ENCODE measurements at regions of chr12 and their contacts with region 1.

Region 1: GRCh38 chr12:132560614-132561426 is 49.6 kb downstream of the LRCOL1 start:
- DNase-seq: peak; percentile 67
- H3K4me3 Mint-ChIP-seq: peak overlapping the region; percentile 67
- H3K27ac Mint-ChIP-seq: no peak overlapping the region
- H3K4me1 Mint-ChIP-seq: peaks cover 5% of the 10 kb centered on the region
- H3K27me3 Mint-ChIP-seq: no peaks in the 10 kb centered on the region
- CTCF ChIP-seq: peak; percentile 85

Region 2: GRCh38 chr12:132153501-132154340 is 407.1 kb before region 1 on chr12:
- CTCF ChIA-PET with region 1: interaction called, 3 read pairs
- POLR2A ChIA-PET with region 1: no interaction called
- intact Hi-C with region 1: loop called (anchors 2 kb)
- DNase-seq: peak; percentile 71
- H3K4me3 Mint-ChIP-seq: no peak overlapping the region
- H3K27ac Mint-ChIP-seq: no peak overlapping the region
- H3K4me1 Mint-ChIP-seq: no peaks in the 10 kb centered on the region
- H3K27me3 Mint-ChIP-seq: no peaks in the 10 kb centered on the region
- CTCF ChIP-seq: peak; percentile 87

Region 3: GRCh38 chr12:132514216-132514820 is 46.5 kb before region 1 on chr12:
- CTCF ChIA-PET with region 1: interaction called, 10 read pairs
- POLR2A ChIA-PET with region 1: no interaction called
- intact Hi-C with region 1: no loop called
- DNase-seq: no peak
- H3K4me3 Mint-ChIP-seq: no peak overlapping the region
- H3K27ac Mint-ChIP-seq: no peak overlapping the region
- H3K4me1 Mint-ChIP-seq: peaks cover 17% of the 10 kb centered on the region
- H3K27me3 Mint-ChIP-seq: no peaks in the 10 kb centered on the region
- CTCF ChIP-seq: no peak

Region 4: DNA sequence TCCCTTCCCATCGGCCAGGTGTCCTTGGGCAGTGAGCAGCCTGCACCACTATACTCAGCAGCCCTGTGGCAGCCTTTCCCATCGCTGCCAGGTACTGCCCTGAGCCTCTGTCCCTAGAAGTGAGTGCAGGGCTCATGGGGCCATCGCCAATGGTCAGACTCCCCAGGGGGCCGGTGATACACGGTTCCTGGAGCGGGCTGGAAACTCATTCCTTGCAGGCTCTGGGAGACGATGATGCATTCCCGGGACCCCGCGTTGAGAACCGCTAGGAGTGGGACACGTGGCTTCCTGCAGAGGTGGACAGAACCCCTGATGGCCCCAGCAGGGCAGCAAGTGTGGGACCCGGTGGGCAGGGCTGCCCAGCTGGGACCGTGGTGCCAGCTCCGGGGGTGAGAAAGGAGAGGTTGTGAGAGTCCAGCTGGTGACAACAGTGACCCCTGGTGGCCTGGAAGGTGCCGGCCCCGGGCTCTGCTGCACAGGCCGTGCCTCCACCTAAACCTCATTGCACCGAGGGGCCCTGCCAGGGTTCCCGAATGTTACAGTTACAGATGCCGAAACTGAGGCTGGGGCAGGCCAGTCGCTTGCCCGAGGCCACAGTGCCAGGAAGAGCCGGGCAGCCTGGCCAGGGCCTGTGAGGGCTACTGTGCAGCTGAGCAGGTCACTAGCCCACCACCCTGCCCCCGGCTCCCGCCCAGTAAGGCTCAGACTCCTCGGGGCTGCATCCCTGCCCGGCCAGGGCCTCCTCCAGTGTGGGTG is 37.1 kb before region 1 on chr12:
- CTCF ChIA-PET with region 1: no interaction called
- POLR2A ChIA-PET with region 1: no interaction called
- intact Hi-C with region 1: loop called (anchors 1 kb)
- DNase-seq: peak; percentile 66
- H3K4me3 Mint-ChIP-seq: peak overlapping the region; percentile 53
- H3K27ac Mint-ChIP-seq: no peak overlapping the region
- H3K4me1 Mint-ChIP-seq: peaks cover 6% of the 10 kb centered on the region
- H3K27me3 Mint-ChIP-seq: no peaks in the 10 kb centered on the region
- CTCF ChIP-seq: peak; percentile 59

Region 5: GRCh38 chr12:132759359-132759758 is 198.5 kb after region 1 on chr12:
- CTCF ChIA-PET with region 1: no interaction called
- POLR2A ChIA-PET with region 1: no interaction called
- intact Hi-C with region 1: no loop called
- DNase-seq: no peak
- H3K4me3 Mint-ChIP-seq: peak overlapping the region; percentile 82
- H3K27ac Mint-ChIP-seq: peak overlapping the region; percentile 90
- H3K4me1 Mint-ChIP-seq: peaks cover 4% of the 10 kb centered on the region
- H3K27me3 Mint-ChIP-seq: no peaks in the 10 kb centered on the region
- CTCF ChIP-seq: no peak

Measured in MCF 10A (cell line).